ENCODE measurements at regions of chr3 and their contacts with region 1.

Region 1: DNA sequence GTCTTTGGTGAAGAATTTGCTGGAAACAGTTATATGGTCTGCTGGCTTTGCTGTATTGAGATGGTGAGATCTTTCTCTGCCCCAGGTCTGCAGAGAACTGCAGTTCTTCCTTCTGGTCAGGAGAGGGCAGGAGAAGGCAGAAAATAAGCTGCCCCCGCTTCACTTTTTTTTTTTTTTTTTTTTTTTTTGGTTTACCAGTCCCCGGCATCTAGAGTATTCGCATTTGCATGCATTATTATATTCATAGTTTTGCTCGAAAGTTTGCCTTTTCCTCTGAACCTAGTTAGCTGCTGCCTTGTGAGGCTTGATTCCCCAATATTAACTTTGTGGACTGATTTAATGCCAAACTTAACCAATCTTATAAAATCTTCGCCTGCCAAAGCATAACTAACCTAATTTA is 10.6 kb upstream of the PARL start:
- DNase-seq: no peak
- H3K4me3 ChIP-seq: no peak overlapping the region
- H3K27ac ChIP-seq: no peak overlapping the region
- H3K4me1 ChIP-seq: peaks cover 0 to 3% (median 0%) of the 10 kb centered on the region in 4 experiments; a peak in 3 of 7 replicates
- H3K27me3 ChIP-seq: no peaks in the 10 kb centered on the region
- CTCF ChIP-seq: peak; percentile 45 to 79 (median 78)
- EP300 ChIP-seq: no peak
- POLR2A ChIP-seq: no peak
- RAD21 ChIP-seq: peak; percentile 88 to 93

Region 2: DNA sequence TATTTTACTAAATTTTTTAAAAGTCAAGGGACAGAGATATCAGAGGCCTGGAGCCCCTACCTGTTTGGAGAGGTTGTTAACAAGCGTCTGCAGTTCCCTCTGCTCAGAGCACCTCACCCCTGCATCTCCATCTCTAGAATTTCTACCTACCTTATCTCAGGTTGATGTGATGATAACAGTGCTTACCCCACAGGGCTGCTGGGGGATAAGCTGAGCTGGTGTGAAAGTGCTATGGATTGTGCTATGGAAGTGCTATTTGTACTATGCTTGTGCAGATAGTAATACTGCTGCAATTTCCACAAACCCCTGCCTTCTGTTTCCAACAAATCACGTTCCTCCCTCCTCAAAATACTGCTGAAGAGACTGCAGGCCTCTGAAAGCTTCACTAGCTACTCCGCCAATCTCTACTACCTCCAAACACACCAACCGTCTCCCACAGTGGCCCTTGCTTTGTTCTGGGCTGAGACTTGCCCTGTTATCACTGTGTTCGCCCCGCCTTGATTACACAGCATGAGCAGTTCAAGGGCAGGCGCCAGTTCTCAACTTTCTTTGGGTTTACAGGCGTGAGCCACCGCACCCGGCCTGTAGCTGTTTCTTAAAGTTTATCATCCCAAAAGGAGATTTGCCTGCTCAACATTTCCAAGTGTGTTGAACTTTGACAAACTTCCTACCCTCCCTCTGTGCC is 17.7 kb after region 1 on chr3:
- CTCF ChIA-PET with region 1: interaction called, 53 read pairs
- POLR2A ChIA-PET with region 1: no interaction called
- DNase-seq: no peak
- H3K4me3 ChIP-seq: no peak overlapping the region
- H3K27ac ChIP-seq: no peak overlapping the region
- H3K4me1 ChIP-seq: peaks cover 0 to 10% (median 0%) of the 10 kb centered on the region in 4 experiments; a peak in 2 of 7 replicates
- H3K27me3 ChIP-seq: no peaks in the 10 kb centered on the region
- CTCF ChIP-seq: no peak
- EP300 ChIP-seq: no peak
- POLR2A ChIP-seq: no peak
- RAD21 ChIP-seq: no peak

Region 3: DNA sequence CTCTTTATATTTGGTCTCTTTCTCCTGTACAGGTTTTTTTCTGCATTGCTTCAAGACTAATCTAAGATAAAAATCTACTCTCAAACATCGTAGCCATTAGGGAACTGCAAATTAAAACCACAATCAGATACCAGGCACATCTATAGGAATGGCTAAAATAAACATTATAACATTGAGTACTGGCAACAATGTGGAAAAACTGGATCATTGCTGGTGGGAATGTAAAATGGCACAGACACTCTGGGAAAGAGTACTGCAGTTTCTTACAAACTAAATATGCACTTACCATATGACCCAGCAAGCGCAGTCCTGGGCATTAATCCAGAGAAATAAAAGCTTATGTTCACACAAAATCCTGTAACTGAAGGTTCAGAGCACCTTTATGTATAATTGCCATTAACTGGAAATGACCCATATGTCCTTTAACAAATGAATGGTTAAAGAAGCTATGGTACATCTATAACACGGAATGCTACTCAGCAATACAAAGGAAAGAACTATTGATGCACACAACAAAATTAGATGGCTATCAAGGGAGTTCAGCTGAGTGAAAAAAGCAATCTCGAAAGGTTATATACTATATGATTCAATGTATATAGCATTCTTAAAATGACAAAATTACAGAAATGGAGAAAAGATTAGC is 116.1 kb after region 1 on chr3:
- CTCF ChIA-PET with region 1: interaction called, 14 read pairs
- POLR2A ChIA-PET with region 1: no interaction called
- DNase-seq: no peak
- H3K4me3 ChIP-seq: no peak overlapping the region
- H3K27ac ChIP-seq: no peak overlapping the region
- H3K4me1 ChIP-seq: peaks cover 0 to 7% (median 3%) of the 10 kb centered on the region in 4 experiments; a peak in 3 of 7 replicates
- H3K27me3 ChIP-seq: no peaks in the 10 kb centered on the region
- CTCF ChIP-seq: no peak
- EP300 ChIP-seq: no peak
- POLR2A ChIP-seq: no peak
- RAD21 ChIP-seq: no peak

Measured in H1 (cell line).